ENCODE measurements at regions of chr1 and their contacts with region 1.

Region 1: GRCh38 chr1:226634166-226634588 is 85.6 kb downstream of the STUM start:
- DNase-seq: peak; percentile 74 to 83 (median 75)
- H3K4me3 ChIP-seq: no peak overlapping the region
- H3K27ac ChIP-seq: no peak overlapping the region
- H3K4me1 ChIP-seq: peaks cover 3 to 28% (median 22%) of the 10 kb centered on the region in 4 experiments
- H3K27me3 ChIP-seq: no peaks in the 10 kb centered on the region

Region 2: GRCh38 chr1:226649780-226650179 is 15.6 kb after region 1 on chr1:
- CTCF ChIA-PET with region 1: interaction called, 17 read pairs
- POLR2A ChIA-PET with region 1: no interaction called
- DNase-seq: peak; percentile 46 to 75 (median 74)
- H3K4me3 ChIP-seq: no peak overlapping the region
- H3K27ac ChIP-seq: no peak overlapping the region
- H3K4me1 ChIP-seq: peaks cover 0 to 55% (median 49%) of the 10 kb centered on the region in 4 experiments
- H3K27me3 ChIP-seq: no peaks in the 10 kb centered on the region

Region 3: DNA sequence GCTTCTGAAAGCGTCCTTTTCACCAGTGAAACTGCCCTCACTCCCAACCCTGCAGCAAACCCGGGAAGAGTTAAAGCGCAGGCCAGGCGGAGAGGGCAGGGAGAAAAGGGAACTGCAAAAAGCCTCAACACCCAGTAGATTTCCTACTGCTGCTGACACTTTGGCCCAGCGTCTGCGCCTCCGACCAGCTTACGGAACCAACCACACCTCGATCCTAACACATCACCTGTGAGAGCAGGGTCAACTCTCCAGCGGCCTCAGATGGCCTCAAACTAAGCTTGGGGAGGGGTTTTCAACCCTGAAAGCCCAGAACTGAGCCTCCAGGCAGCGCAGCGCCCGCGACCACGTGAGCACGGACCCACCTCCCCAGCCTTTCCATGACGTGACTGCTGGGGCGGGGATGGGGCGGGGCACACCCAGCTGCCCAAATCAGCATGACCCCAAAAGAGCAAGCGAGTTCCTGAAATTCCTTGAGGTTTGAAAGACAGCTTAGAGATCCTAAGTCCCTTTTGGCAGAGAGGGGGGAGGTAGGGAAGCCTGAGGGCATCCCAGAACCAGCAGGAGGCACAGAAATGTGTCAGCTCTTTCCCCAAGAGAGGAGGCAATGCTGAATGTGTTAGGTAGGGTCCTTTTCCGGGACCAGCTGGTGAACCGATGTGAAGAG is 45.8 kb after region 1 on chr1:
- CTCF ChIA-PET with region 1: interaction called, 213 read pairs
- POLR2A ChIA-PET with region 1: interaction called, 3 read pairs
- DNase-seq: peak; percentile 64 to 77 (median 64)
- H3K4me3 ChIP-seq: peak overlapping the region; percentile 36 to 83 (median 66)
- H3K27ac ChIP-seq: peak overlapping the region; percentile 71 to 85
- H3K4me1 ChIP-seq: peaks cover 42 to 65% (median 56%) of the 10 kb centered on the region in 4 experiments
- H3K27me3 ChIP-seq: no peaks in the 10 kb centered on the region

Region 4: DNA sequence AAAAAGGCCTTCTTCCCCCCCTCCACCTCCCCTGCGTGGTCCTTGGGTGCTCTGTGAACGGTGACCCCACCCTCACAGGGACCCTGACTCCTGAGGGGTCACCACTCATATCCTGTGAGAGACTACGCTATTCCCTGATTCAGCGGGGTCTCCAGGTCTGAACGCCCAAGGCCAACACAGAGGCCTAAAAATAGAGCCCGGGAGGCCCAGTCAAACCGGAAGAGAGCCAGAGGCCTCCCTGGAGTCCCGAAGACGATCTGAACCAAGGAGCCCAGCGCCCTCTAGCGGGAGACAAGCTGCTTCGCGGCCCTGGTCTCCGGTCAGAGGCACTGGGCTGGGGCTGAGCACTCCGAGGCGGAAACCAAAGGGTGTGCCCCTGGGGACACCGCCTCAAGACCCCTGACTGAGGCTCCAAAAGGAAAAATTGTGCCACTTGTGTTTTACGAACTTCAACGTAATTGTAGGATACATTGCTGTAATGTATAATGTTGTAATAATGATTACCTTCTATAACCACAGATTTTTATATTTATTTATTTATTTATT is 193.9 kb after region 1 on chr1:
- CTCF ChIA-PET with region 1: interaction called, 106 read pairs
- POLR2A ChIA-PET with region 1: interaction called, 4 read pairs
- DNase-seq: peak; percentile 93 to 97 (median 96)
- H3K4me3 ChIP-seq: peak overlapping the region in 4 of 7 experiments; percentile 13 to 63 (median 48)
- H3K27ac ChIP-seq: peak overlapping the region; percentile 59 to 85
- H3K4me1 ChIP-seq: peaks cover 4 to 15% (median 9%) of the 10 kb centered on the region in 4 experiments
- H3K27me3 ChIP-seq: no peaks in the 10 kb centered on the region